Activated CD8-positive, alpha-beta memory T cell treated with anti-CD3 and anti-CD28 coated beads, Interleukin-2, amount 10 ng/mL, durations not matched to agents 7 days and 5 days (primary cell): ENCODE measurements at regions of chr22 and their contacts with region 1.

Region 1: GRCh38 chr22:22587577-22588188 is 28.6 kb upstream of the PRAME start:
- DNase-seq: no peak
- ATAC-seq: no peak
- H3K4me3 Mint-ChIP-seq: no peak overlapping the region
- H3K27ac Mint-ChIP-seq: no peak overlapping the region
- H3K4me1 Mint-ChIP-seq: no peaks in the 10 kb centered on the region
- H3K27me3 Mint-ChIP-seq: peaks cover 48% of the 10 kb centered on the region

Region 2: DNA sequence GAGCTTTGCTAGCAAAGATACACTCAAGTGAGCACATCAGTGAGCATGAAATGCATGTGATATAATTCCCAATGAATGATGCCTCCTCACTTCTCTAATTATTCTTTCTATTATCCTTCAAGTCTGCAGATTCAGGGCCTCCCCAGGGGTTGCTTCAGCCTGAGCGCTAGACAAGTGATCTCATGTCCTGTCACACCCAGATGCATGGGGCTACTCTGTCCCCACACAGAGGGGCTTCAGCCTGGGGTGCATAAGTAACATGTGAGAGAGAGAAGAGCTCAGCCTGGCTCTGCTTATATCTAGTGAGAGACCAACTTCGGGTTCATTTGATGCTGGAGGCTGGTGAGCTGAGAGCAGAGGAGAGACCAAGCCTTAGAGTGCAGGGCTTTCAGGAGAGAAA is 257.9 kb before region 1 on chr22:
- CTCF ChIA-PET with region 1: no interaction called
- DNase-seq: no peak
- ATAC-seq: no peak
- H3K4me3 Mint-ChIP-seq: no peak overlapping the region
- H3K27ac Mint-ChIP-seq: no peak overlapping the region
- H3K4me1 Mint-ChIP-seq: peaks cover 5% of the 10 kb centered on the region
- H3K27me3 Mint-ChIP-seq: peaks cover 41% of the 10 kb centered on the region

Region 3: DNA sequence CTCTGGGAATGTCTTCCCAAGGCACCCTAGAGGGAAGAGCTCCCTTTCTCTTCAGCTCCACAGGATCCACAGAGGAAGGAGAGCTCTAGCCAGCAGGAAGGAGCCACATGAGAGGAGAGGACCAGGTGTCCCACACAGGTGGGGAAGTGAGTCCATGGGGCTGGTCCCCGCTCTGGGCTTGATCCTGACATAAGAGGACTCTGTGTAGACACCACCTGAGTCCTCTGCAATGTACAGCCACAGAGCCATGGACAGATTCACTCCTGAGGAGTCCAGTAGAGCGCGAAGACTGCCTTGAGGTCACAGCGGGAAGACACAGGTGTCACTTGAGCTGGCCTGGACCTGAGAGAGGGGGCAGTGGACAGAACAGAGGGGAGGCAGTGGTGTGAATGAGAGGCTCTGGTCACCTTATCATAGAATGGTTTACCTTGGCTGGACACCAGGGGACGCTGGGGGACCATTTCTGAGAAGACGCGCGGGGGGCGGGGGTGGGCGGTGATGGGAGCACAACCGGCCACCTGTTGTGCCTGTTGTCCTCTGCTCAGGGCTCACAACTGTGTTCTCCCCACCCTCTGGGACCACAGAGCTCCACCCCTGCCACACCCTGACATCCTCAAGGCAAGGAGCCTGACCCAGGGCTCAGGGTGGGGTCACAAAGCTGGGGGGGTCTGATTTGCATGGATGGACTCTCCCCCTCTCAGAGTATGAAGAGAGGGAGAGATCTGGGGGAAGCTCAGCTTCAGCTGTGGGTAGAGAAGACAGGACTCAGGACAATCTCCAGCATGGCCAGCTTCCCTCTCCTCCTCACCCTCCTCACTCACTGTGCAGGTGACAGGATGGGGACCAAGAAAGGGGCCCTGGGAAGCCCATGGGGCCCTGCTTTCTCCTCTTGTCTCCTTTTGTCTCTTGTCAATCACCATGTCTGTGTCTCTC is 207.3 kb before region 1 on chr22:
- CTCF ChIA-PET with region 1: no interaction called
- DNase-seq: no peak
- ATAC-seq: no peak
- H3K4me3 Mint-ChIP-seq: no peak overlapping the region
- H3K27ac Mint-ChIP-seq: no peak overlapping the region
- H3K4me1 Mint-ChIP-seq: no peaks in the 10 kb centered on the region
- H3K27me3 Mint-ChIP-seq: peaks cover 53% of the 10 kb centered on the region

Region 4: GRCh38 chr22:22576244-22576988 is 11.3 kb before region 1 on chr22:
- CTCF ChIA-PET with region 1: interaction called, 40 read pairs
- DNase-seq: no peak
- ATAC-seq: peak; percentile 49
- H3K4me3 Mint-ChIP-seq: no peak overlapping the region
- H3K27ac Mint-ChIP-seq: no peak overlapping the region
- H3K4me1 Mint-ChIP-seq: no peaks in the 10 kb centered on the region
- H3K27me3 Mint-ChIP-seq: peaks cover 27% of the 10 kb centered on the region

Region 5: GRCh38 chr22:22598144-22598543 is 10.5 kb after region 1 on chr22:
- CTCF ChIA-PET with region 1: interaction called, 18 read pairs
- DNase-seq: no peak
- ATAC-seq: no peak
- H3K4me3 Mint-ChIP-seq: no peak overlapping the region
- H3K27ac Mint-ChIP-seq: no peak overlapping the region
- H3K4me1 Mint-ChIP-seq: no peaks in the 10 kb centered on the region
- H3K27me3 Mint-ChIP-seq: peaks cover 10% of the 10 kb centered on the region

Region 6: DNA sequence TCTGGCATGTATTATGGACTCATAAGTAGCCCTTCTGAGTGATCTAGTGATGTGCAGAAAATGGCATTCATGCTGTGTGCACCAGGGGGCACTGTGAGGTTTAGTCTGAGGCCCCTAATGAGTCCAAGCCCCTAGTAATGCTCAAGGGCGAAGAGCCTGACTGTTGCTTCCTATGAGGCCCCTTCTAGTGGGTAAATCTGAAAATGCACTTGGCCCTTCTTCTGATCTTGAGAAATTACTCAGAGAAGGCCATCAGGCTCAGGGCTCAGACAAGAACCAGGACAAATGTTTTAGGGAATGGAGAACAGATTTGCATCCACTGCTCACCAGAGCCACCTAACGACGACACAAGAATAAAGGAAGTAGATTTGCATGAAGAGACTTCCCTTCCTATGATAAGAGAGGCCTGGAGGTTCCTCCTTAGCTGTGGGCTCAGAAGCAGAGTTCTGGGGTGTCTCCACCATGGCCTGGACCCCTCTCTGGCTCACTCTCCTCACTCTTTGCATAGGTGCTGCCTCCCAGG is 132.6 kb after region 1 on chr22:
- CTCF ChIA-PET with region 1: no interaction called
- DNase-seq: peak; percentile 72
- ATAC-seq: peak; percentile 88
- H3K4me3 Mint-ChIP-seq: no peak overlapping the region
- H3K27ac Mint-ChIP-seq: peak overlapping the region; percentile 37
- H3K4me1 Mint-ChIP-seq: peaks cover 34% of the 10 kb centered on the region
- H3K27me3 Mint-ChIP-seq: peaks cover 2% of the 10 kb centered on the region